OCI-LY7 (cell line): ENCODE measurements at regions of chr5 and their contacts with region 1.

Region 1: GRCh38 chr5:174951146-174951780 is 226.9 kb downstream of the MSX2 start:
- DNase-seq: peak; percentile 75
- H3K4me3 ChIP-seq: no peak overlapping the region
- H3K27ac ChIP-seq: no peak overlapping the region
- H3K4me1 ChIP-seq: no peaks in the 10 kb centered on the region
- CTCF ChIP-seq: peak; percentile 92

Region 2: DNA sequence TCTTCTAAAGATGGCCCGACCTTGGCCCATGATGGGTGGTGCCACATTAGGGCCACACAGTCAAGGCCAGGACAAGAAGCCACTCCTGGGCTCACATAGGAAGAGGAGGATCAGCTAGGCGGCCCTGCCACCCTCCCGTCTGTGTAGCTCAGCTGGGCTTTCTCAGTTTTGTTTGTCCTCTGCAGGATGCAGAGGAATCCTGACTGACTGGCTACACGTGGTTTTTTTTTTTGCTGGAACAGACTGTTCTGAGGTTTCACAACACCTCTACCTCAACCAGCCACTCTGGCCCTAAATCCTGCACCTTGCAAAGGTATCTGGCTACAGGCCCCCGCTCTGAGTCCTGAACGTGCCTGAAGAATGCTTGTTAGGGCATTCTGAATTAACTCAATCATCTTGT is 315.2 kb before region 1 on chr5:
- CTCF ChIA-PET with region 1: no interaction called
- POLR2A ChIA-PET with region 1: no interaction called
- intact Hi-C with region 1: no loop called
- DNase-seq: no peak
- H3K4me3 ChIP-seq: no peak overlapping the region
- H3K27ac ChIP-seq: no peak overlapping the region
- H3K4me1 ChIP-seq: no peaks in the 10 kb centered on the region
- CTCF ChIP-seq: no peak

Region 3: GRCh38 chr5:175444905-175445456 is 493.7 kb after region 1 on chr5:
- CTCF ChIA-PET with region 1: no interaction called
- POLR2A ChIA-PET with region 1: no interaction called
- intact Hi-C with region 1: loop called (anchors 5 kb)
- DNase-seq: no peak
- H3K4me3 ChIP-seq: no peak overlapping the region
- H3K27ac ChIP-seq: no peak overlapping the region
- H3K4me1 ChIP-seq: no peaks in the 10 kb centered on the region
- CTCF ChIP-seq: no peak

Region 4: GRCh38 chr5:175460132-175460531 is 508.9 kb after region 1 on chr5:
- CTCF ChIA-PET with region 1: no interaction called
- POLR2A ChIA-PET with region 1: no interaction called
- intact Hi-C with region 1: loop called (anchors 1 kb)
- DNase-seq: no peak
- H3K4me3 ChIP-seq: no peak overlapping the region
- H3K27ac ChIP-seq: no peak overlapping the region
- H3K4me1 ChIP-seq: peaks cover 22% of the 10 kb centered on the region
- CTCF ChIP-seq: peak; percentile 70

Region 5: GRCh38 chr5:175542232-175542965 is 591.1 kb after region 1 on chr5:
- CTCF ChIA-PET with region 1: no interaction called
- POLR2A ChIA-PET with region 1: no interaction called
- intact Hi-C with region 1: no loop called
- DNase-seq: no peak
- H3K4me3 ChIP-seq: no peak overlapping the region
- H3K27ac ChIP-seq: no peak overlapping the region
- H3K4me1 ChIP-seq: no peaks in the 10 kb centered on the region
- CTCF ChIP-seq: no peak

Region 6: DNA sequence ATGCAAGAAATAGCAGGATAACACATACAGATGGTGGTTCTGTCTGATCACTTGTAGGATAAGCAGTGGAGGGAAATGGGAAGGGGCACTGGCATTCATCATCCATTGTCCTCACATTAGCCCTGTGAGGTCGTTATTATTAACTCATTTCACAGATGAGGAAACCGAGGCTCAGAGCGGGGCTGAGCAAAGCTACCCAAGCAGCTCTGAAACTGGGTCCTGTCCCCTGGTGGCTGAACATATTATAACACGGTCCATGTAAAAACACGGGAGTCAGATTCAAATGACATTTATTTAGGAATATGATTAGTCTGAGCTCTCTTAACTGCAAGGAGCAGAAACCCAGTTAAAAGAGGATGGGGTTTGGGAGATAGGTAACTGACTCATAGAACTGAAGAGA is 749.7 kb after region 1 on chr5:
- CTCF ChIA-PET with region 1: no interaction called
- POLR2A ChIA-PET with region 1: no interaction called
- intact Hi-C with region 1: loop called (anchors 5 kb)
- DNase-seq: peak; percentile 11
- H3K4me3 ChIP-seq: no peak overlapping the region
- H3K27ac ChIP-seq: no peak overlapping the region
- H3K4me1 ChIP-seq: no peaks in the 10 kb centered on the region
- CTCF ChIP-seq: peak; percentile 76

Region 7: DNA sequence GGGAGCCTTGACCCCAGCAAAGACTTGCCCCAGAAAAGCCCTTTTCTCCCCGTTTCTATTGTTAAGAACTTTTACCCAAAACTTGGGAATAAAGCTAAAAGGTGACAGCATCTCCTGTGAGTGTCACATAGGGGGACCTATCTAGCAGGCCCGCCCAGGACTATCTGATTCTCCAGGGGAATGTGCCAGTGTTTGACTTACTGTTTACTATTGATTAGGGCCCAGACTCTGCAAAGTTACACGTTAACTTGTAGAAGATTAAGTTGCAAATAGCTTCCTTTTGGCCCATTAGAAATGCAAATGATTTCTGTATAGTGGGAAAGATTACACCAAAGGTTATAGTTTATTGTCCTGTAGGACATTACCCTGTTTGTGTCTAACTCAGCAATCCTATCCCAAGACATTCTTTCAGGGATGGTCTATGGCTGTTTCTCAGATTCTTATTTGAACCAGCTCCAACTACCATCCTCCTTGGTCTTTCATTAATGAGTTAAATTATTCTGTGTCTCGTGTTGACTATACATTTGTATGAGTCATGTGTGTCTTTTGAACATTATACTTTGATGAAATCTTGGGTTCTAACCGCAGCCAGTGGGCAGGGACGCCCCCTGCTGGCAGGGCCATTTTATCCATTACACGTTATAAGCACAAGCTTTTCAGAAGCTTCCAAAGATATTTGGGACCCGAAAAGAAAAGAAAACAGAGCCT is 767.3 kb after region 1 on chr5:
- CTCF ChIA-PET with region 1: no interaction called
- POLR2A ChIA-PET with region 1: no interaction called
- intact Hi-C with region 1: loop called (anchors 5 kb)
- DNase-seq: peak; percentile 27
- H3K4me3 ChIP-seq: no peak overlapping the region
- H3K27ac ChIP-seq: no peak overlapping the region
- H3K4me1 ChIP-seq: no peaks in the 10 kb centered on the region
- CTCF ChIP-seq: peak; percentile 87